Naive thymus-derived CD8-positive, alpha-beta T cell (primary cell): ENCODE measurements at regions of chr17 and their contacts with region 1.

Region 1: GRCh38 chr17:43927060-43927864 is 15.0 kb downstream of the PPY start:
- DNase-seq: peak in 2 of 10 donors; percentile 16 to 19
- ATAC-seq: peak; percentile 50 to 82
- H3K4me3 Mint-ChIP-seq: peak overlapping the region; percentile 83 to 95 (median 88)
- H3K27ac Mint-ChIP-seq: peak overlapping the region; percentile 79 to 97 (median 90)
- H3K4me1 Mint-ChIP-seq: peaks cover 18 to 30% (median 27%) of the 10 kb centered on the region in 4 donors
- H3K27me3 Mint-ChIP-seq: peaks cover 0 to 10% (median 0%) of the 10 kb centered on the region in 5 donors

Region 2: GRCh38 chr17:43907425-43907981 is 19.8 kb before region 1 on chr17 and contains the start of gene MPP2:
- POLR2A ChIA-PET with region 1: interaction called, 10 read pairs
- DNase-seq: peak; percentile 43 to 84 (median 66)
- ATAC-seq: peak; percentile 67 to 73
- H3K4me3 Mint-ChIP-seq: peak within 1 kb of the TSS; percentile 85 to 99 (median 92)
- H3K27ac Mint-ChIP-seq: peak within 1 kb of the TSS in 9 of 10 donors; percentile 66 to 98 (median 96)
- H3K4me1 Mint-ChIP-seq: peaks cover 9 to 21% (median 20%) of the 10 kb centered on the region in 4 donors
- H3K27me3 Mint-ChIP-seq: peaks cover 0 to 15% (median 0%) of the 10 kb centered on the region in 5 donors
- polyA plus RNA-seq, gene MPP2: 1.1 to 4.0 (median 3.1) TPM

Region 3: DNA sequence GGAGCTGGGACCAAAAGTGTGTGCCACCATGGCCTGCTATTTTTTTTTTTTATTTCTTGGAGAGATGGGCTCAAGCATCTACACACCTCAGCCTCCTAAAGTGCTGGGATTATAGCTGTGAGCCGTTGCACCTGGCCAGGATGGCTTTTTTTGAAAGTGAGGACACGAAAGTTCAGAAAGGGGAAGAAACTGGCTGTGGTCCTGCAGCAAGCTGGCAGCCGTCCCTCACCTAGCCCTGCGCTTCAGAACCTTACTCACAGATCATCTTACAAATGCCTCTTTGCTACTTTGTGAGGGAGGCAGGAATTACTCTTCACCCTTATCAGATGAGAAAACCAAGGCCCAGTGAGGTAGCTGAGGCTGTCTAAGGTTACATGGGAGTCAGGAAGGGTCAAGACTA is 19.5 kb after region 1 on chr17:
- POLR2A ChIA-PET with region 1: no interaction called
- DNase-seq: no peak
- ATAC-seq: no peak
- H3K4me3 Mint-ChIP-seq: no peak overlapping the region
- H3K27ac Mint-ChIP-seq: no peak overlapping the region
- H3K4me1 Mint-ChIP-seq: peaks cover 0 to 4% (median 2%) of the 10 kb centered on the region in 4 donors
- H3K27me3 Mint-ChIP-seq: peaks cover 8 to 28% (median 23%) of the 10 kb centered on the region in 5 donors